MCF 10A (cell line): ENCODE measurements at regions of chr12 and their contacts with region 1.

Region 1: GRCh38 chr12:82527165-82527780 is 159.4 kb upstream of the TMTC2 start:
- DNase-seq: peak; percentile 79
- H3K4me3 Mint-ChIP-seq: no peak overlapping the region
- H3K27ac Mint-ChIP-seq: no peak overlapping the region
- H3K4me1 Mint-ChIP-seq: no peaks in the 10 kb centered on the region
- H3K27me3 Mint-ChIP-seq: peaks cover 11% of the 10 kb centered on the region
- CTCF ChIP-seq: peak; percentile 83

Region 2: GRCh38 chr12:82299319-82300025 is 227.8 kb before region 1 on chr12:
- CTCF ChIA-PET with region 1: no interaction called
- POLR2A ChIA-PET with region 1: no interaction called
- intact Hi-C with region 1: no loop called
- DNase-seq: no peak
- H3K4me3 Mint-ChIP-seq: no peak overlapping the region
- H3K27ac Mint-ChIP-seq: no peak overlapping the region
- H3K4me1 Mint-ChIP-seq: peaks cover 4% of the 10 kb centered on the region
- H3K27me3 Mint-ChIP-seq: no peaks in the 10 kb centered on the region
- CTCF ChIP-seq: no peak

Region 3: DNA sequence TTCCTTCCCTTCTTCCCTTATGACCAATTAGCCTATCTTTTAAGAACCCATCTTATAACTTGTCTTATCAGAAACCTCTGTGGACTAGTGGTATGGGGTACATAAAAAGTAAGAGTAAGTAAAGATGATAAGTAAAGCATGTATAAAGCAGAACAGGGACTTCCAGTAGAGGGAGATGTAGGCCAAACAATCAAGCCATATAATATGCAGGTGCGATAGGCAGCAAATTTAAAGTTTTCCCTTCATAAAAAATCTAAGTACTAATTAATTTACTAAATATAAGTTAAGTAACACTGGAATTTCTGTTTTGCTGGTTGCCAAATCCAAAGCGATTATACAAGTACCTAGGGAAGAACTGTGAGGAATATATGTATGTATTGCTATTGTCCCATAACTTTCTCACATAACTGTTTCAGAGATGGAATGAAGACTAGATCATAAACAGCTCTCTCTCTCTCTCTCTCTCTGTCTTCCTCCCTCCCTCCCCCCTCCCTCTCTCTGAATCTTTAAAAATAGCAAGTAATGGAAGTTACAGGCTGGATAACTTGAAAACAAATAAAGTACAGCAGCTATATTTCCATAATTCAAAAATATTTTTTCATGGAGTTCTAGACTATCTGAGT is 143.2 kb before region 1 on chr12:
- CTCF ChIA-PET with region 1: interaction called, 3 read pairs
- POLR2A ChIA-PET with region 1: no interaction called
- intact Hi-C with region 1: loop called (anchors 10 kb)
- DNase-seq: peak; percentile 51
- H3K4me3 Mint-ChIP-seq: no peak overlapping the region
- H3K27ac Mint-ChIP-seq: no peak overlapping the region
- H3K4me1 Mint-ChIP-seq: no peaks in the 10 kb centered on the region
- H3K27me3 Mint-ChIP-seq: no peaks in the 10 kb centered on the region
- CTCF ChIP-seq: peak; percentile 51

Region 4: DNA sequence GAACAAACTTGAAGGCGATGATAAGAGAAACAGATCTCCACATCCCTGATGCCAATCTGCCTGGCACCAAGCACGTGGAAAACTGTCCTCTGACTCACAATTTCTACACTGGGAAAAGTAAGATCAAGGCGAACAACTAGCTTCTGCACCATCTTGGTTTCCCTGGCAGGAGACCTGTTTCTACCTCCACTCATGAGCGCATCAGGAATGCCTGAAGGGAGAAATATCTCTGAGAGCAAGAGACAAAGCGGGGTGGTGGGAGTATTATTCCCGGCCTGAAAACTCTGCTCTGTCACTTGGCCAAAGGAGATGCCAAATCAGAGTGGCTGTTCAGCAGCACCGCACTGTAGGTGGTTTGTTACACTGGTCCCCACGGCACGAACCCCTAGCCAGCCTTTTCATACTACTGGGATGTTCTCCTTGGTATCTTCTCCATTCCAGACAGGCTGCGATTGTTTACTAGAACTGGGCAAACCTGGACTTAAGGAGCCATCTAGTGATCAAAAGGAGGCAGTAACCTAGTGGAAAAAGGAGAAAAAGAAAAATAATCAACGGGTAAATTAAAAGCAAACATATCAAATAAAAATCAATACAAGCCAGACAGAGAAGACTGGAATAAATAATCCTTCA is 100.4 kb after region 1 on chr12:
- CTCF ChIA-PET with region 1: interaction called, 8 read pairs
- POLR2A ChIA-PET with region 1: no interaction called
- intact Hi-C with region 1: loop called (anchors 1 kb)
- DNase-seq: peak; percentile 52
- H3K4me3 Mint-ChIP-seq: no peak overlapping the region
- H3K27ac Mint-ChIP-seq: no peak overlapping the region
- H3K4me1 Mint-ChIP-seq: peaks cover 6% of the 10 kb centered on the region
- H3K27me3 Mint-ChIP-seq: no peaks in the 10 kb centered on the region
- CTCF ChIP-seq: peak; percentile 46

Region 5: GRCh38 chr12:84502907-84503787 is 1975.9 kb after region 1 on chr12:
- CTCF ChIA-PET with region 1: no interaction called
- POLR2A ChIA-PET with region 1: no interaction called
- intact Hi-C with region 1: loop called (anchors 5 kb)
- DNase-seq: peak; percentile 76
- H3K4me3 Mint-ChIP-seq: no peak overlapping the region
- H3K27ac Mint-ChIP-seq: no peak overlapping the region
- H3K4me1 Mint-ChIP-seq: peaks cover 23% of the 10 kb centered on the region
- H3K27me3 Mint-ChIP-seq: no peaks in the 10 kb centered on the region
- CTCF ChIP-seq: peak; percentile 51